ENCODE measurements at regions of chr7 and their contacts with region 1.

Region 1: GRCh38 chr7:5452937-5453540 is 29.4 kb upstream of the TNRC18 start:
- DNase-seq: no peak
- ATAC-seq: no peak
- H3K4me3 ChIP-seq: no peak overlapping the region
- H3K4me3 Mint-ChIP-seq: no peak overlapping the region
- H3K27ac ChIP-seq: no peak overlapping the region
- H3K27ac Mint-ChIP-seq: no peak overlapping the region
- H3K4me1 ChIP-seq: peaks cover 0 to 6% of the 10 kb centered on the region in 2 experiments
- H3K4me1 Mint-ChIP-seq: peaks cover 0 to 6% (median 0%) of the 10 kb centered on the region in 3 donors
- H3K27me3 ChIP-seq: peaks cover 0 to 37% of the 10 kb centered on the region in 2 experiments
- H3K27me3 Mint-ChIP-seq: peaks cover 3 to 4% of the 10 kb centered on the region in 2 donors

Region 2: GRCh38 chr7:5390918-5391317 is 62.1 kb before region 1 on chr7:
- CTCF ChIA-PET with region 1: interaction called, 3 read pairs
- POLR2A ChIA-PET with region 1: interaction called in 1 of 2 experiments, 10 read pairs
- DNase-seq: no peak
- ATAC-seq: no peak
- H3K4me3 ChIP-seq: no peak overlapping the region
- H3K4me3 Mint-ChIP-seq: no peak overlapping the region
- H3K27ac ChIP-seq: no peak overlapping the region
- H3K27ac Mint-ChIP-seq: no peak overlapping the region
- H3K4me1 ChIP-seq: peaks cover 6 to 46% of the 10 kb centered on the region in 2 experiments
- H3K4me1 Mint-ChIP-seq: peaks cover 23 to 34% (median 34%) of the 10 kb centered on the region in 3 donors
- H3K27me3 ChIP-seq: no peaks in the 10 kb centered on the region
- H3K27me3 Mint-ChIP-seq: no peaks in the 10 kb centered on the region